ENCODE measurements at regions of chr11 and their contacts with region 1.

Region 1: DNA sequence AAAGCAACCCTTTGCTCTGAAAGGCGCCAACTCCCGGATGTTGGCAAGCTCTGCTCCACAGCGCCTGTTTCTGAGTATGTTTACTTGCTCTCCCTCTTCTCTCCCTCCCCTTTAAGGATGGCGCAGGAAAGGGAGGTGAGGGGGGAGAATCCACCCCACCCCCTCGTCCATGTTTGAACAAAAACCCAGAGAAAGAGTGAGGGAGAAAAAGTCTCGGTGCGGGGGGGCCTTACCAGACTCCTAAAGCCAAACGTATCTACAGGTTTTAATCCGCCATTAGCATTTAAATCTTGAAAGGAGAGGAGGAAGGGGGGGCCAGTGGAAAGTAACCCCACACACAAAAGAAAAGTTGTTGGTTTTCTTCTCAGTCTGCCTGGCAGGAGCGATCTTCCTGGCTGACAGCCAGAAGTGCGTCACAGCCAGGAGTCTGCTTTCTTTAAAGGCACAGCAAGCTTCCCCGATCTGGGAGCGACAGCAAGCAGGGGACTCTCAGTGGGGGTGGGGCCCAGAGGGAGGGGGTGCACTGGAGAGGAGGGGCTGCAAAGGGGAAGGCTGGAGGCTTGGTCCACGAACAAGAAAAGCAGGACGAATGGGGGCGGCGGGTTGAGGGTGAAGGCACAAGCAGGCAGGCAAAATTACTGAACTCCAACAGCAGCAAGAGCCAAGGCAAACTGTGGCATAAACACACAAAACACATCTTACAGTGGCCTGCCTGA is 39.5 kb downstream of the NUMA1 start:
- DNase-seq: peak; percentile 91 to 94
- ATAC-seq: peak; percentile 78 to 79
- H3K4me3 ChIP-seq: peak overlapping the region; percentile 57 to 83 (median 70)
- H3K27ac ChIP-seq: peak overlapping the region; percentile 87 to 97 (median 97)
- H3K4me1 ChIP-seq: peaks cover 40 to 50% of the 10 kb centered on the region in 2 donors
- H3K27me3 ChIP-seq: no peaks in the 10 kb centered on the region
- CTCF ChIP-seq: peak in 1 of 5 experiments; percentile 22
- POLR2A ChIP-seq: peak in 1 of 2 donors; percentile 69

Region 2: GRCh38 chr11:71998662-71999310 is 42.1 kb before region 1 on chr11 and contains the start of gene IL18BP:
- in situ Hi-C with region 1: no loop called
- intact Hi-C with region 1: no loop called
- DNase-seq: no peak
- ATAC-seq: no peak
- H3K4me3 ChIP-seq: peak within 1 kb of the TSS in 2 of 4 donors; percentile 22 to 24
- H3K27ac ChIP-seq: peak within 1 kb of the TSS; percentile 39 to 73 (median 58)
- H3K4me1 ChIP-seq: peaks cover 7 to 10% of the 10 kb centered on the region in 2 donors
- H3K27me3 ChIP-seq: no peaks in the 10 kb centered on the region
- CTCF ChIP-seq: no peak
- POLR2A ChIP-seq: no peak
- total RNA-seq, gene IL18BP: 0.91 to 3.0 (median 2.5) TPM

Region 3: GRCh38 chr11:72075109-72075508 is 34.2 kb after region 1 on chr11:
- in situ Hi-C with region 1: loop called in 3 of 4 experiments (anchors 5 kb)
- intact Hi-C with region 1: loop called (anchors 1 kb)
- DNase-seq: no peak
- ATAC-seq: no peak
- H3K4me3 ChIP-seq: no peak overlapping the region
- H3K27ac ChIP-seq: no peak overlapping the region
- H3K4me1 ChIP-seq: peaks cover 20 to 27% of the 10 kb centered on the region in 2 donors
- H3K27me3 ChIP-seq: no peaks in the 10 kb centered on the region
- CTCF ChIP-seq: no peak
- POLR2A ChIP-seq: no peak

Region 4: GRCh38 chr11:72112321-72113219 is 71.7 kb after region 1 on chr11 and contains the start of gene ANAPC15:
- in situ Hi-C with region 1: no loop called
- intact Hi-C with region 1: loop called (anchors 1 kb)
- DNase-seq: peak; percentile 98 to 99
- ATAC-seq: peak; percentile 94 to 95
- H3K4me3 ChIP-seq: peak within 1 kb of the TSS; percentile 59 to 68 (median 66)
- H3K27ac ChIP-seq: peak within 1 kb of the TSS; percentile 95 to 99 (median 98)
- H3K4me1 ChIP-seq: peaks cover 11 to 13% of the 10 kb centered on the region in 2 donors
- H3K27me3 ChIP-seq: no peaks in the 10 kb centered on the region
- CTCF ChIP-seq: no peak
- POLR2A ChIP-seq: peak; percentile 77 to 84
- total RNA-seq, gene ANAPC15: 21.2 to 39.3 (median 32.4) TPM

Measured in gastrocnemius medialis (tissue), 4 donors.